ENCODE measurements at regions of chr6 and their contacts with region 1.

Region 1: GRCh38 chr6:26156076-26156849 is 69.0 kb downstream of the HFE start:
- DNase-seq: peak; percentile 91
- ATAC-seq: peak; percentile 55
- H3K4me3 Mint-ChIP-seq: peak overlapping the region; percentile 94
- H3K27ac Mint-ChIP-seq: peak overlapping the region; percentile 99
- H3K4me1 Mint-ChIP-seq: peaks cover 37% of the 10 kb centered on the region
- H3K27me3 Mint-ChIP-seq: peaks cover 8% of the 10 kb centered on the region

Region 2: GRCh38 chr6:26025894-26026832 is 130.1 kb before region 1 on chr6:
- CTCF ChIA-PET with region 1: interaction called, 6 read pairs
- POLR2A ChIA-PET with region 1: interaction called, 312 read pairs
- DNase-seq: peak; percentile 97
- ATAC-seq: peak; percentile 42
- H3K4me3 Mint-ChIP-seq: peak overlapping the region; percentile 86
- H3K27ac Mint-ChIP-seq: peak overlapping the region; percentile 99
- H3K4me1 Mint-ChIP-seq: peaks cover 86% of the 10 kb centered on the region
- H3K27me3 Mint-ChIP-seq: peaks cover 3% of the 10 kb centered on the region

Region 3: DNA sequence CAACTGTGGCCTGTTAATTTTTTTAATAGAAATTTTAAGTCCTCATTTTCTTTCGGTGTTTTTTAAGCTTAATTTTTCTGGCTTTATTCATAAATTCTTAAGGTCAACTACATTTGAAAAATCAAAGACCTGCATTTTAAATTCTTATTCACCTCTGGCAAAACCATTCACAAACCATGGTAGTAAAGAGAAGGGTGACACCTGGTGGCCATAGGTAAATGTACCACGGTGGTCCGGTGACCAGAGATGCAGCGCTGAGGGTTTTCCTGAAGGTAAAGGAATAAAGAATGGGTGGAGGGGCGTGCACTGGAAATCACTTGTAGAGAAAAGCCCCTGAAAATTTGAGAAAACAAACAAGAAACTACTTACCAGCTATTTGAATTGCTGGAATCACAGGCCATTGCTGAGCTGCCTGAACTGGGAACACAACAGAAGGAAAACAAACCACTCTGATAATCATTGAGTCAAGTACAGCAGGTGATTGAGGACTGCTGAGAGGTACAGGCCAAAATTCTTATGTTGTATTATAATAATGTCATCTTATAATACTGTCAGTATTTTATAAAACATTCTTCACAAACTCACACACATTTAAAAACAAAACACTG is 58.9 kb before region 1 on chr6:
- CTCF ChIA-PET with region 1: interaction called, 3 read pairs
- POLR2A ChIA-PET with region 1: interaction called, 213 read pairs
- DNase-seq: peak; percentile 78
- ATAC-seq: peak; percentile 85
- H3K4me3 Mint-ChIP-seq: no peak overlapping the region
- H3K27ac Mint-ChIP-seq: no peak overlapping the region
- H3K4me1 Mint-ChIP-seq: peaks cover 16% of the 10 kb centered on the region
- H3K27me3 Mint-ChIP-seq: peaks cover 9% of the 10 kb centered on the region

Region 4: GRCh38 chr6:26175428-26176181 is 19.3 kb after region 1 on chr6:
- CTCF ChIA-PET with region 1: interaction called, 5 read pairs
- POLR2A ChIA-PET with region 1: interaction called, 664 read pairs
- DNase-seq: peak; percentile 82
- ATAC-seq: peak; percentile 11
- H3K4me3 Mint-ChIP-seq: peak overlapping the region; percentile 38
- H3K27ac Mint-ChIP-seq: peak overlapping the region; percentile 59
- H3K4me1 Mint-ChIP-seq: peaks cover 42% of the 10 kb centered on the region
- H3K27me3 Mint-ChIP-seq: no peaks in the 10 kb centered on the region

Region 5: GRCh38 chr6:26223650-26224546 is 67.6 kb after region 1 on chr6:
- CTCF ChIA-PET with region 1: no interaction called
- POLR2A ChIA-PET with region 1: interaction called, 72 read pairs
- DNase-seq: peak; percentile 83
- ATAC-seq: peak; percentile 83
- H3K4me3 Mint-ChIP-seq: no peak overlapping the region
- H3K27ac Mint-ChIP-seq: no peak overlapping the region
- H3K4me1 Mint-ChIP-seq: peaks cover 37% of the 10 kb centered on the region
- H3K27me3 Mint-ChIP-seq: no peaks in the 10 kb centered on the region

Region 6: DNA sequence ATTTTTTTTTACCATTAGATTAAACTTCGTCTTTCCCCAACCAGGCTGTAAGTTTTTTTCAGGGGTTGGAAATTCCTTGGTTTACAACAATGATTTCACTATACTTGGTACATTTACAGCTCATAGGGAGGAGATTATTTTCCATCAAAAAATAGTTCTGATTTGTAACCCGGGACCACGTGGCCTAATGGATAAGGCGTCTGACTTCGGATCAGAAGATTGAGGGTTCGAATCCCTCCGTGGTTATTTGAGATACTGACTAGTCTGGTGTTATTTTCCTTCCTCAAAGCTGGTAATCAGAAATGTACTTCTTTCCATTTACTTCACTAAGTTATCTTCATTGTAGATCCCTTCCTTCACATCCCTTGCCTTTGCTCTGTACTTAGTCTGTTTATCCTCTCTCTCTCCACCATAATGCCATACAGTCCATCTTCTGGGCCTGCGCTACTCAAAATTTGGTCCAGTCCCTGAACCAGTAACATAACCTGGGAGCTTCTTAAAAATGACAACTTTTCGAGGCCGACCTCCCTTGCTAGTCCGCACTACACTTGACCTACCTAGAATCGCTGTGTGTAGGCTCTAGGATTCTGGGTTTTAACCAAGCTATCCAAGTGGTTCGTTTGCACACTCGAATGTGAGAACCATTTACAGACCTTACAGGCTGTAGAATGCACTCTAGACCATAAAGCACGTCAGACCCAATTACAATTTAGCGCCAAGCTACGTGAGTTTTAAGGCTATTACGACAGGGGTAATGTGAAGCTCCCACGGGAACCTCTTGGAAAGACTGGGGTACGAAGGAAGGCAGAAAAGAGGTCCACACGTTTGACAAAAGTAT is 166.6 kb after region 1 on chr6:
- CTCF ChIA-PET with region 1: no interaction called
- POLR2A ChIA-PET with region 1: no interaction called
- DNase-seq: peak; percentile 84
- ATAC-seq: peak; percentile 72
- H3K4me3 Mint-ChIP-seq: peak overlapping the region; percentile 86
- H3K27ac Mint-ChIP-seq: peak overlapping the region; percentile 86
- H3K4me1 Mint-ChIP-seq: peaks cover 36% of the 10 kb centered on the region
- H3K27me3 Mint-ChIP-seq: peaks cover 16% of the 10 kb centered on the region

Region 7: DNA sequence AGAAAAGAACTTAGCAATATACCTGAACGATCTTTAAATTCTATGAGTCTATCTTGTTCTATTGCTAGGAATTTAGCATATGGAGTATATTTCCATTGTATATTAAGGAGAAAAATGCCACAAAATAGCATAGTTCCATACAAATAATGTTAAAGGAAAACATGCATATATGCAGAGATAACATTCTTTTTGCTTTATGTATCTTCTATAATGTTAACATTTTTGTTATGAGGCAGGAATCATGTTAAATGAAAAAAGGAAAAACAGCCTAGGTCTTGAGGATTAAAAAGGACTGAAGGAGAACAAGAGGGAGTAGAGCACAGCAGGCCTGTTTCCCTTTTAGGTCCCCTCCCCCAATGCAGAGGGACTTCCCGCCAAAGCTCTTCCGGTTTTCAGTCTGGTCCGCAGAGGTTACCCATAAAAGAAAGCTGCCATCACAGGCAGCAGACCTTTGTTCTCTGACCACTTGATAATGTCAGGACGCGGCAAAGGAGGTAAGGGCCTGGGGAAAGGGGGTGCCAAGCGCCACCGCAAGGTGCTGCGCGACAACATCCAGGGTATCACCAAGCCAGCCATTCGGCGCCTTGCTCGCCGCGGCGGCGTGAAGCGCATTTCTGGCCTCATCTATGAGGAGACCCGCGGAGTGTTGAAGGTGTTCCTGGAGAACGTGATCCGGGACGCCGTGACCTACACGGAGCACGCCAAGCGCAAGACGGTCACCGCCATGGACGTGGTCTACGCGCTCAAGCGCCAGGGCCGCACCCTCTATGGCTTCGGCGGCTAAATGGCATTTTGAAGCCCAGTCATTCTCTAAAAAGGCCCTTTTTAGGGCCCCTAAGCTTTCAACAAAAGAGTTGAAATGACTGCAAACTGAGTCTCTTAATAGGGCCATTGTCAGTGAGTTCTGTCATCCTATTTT is 982.8 kb after region 1 on chr6:
- CTCF ChIA-PET with region 1: no interaction called
- POLR2A ChIA-PET with region 1: interaction called, 72 read pairs
- DNase-seq: peak; percentile 87
- ATAC-seq: peak; percentile 68
- H3K4me3 Mint-ChIP-seq: peak overlapping the region; percentile 95
- H3K27ac Mint-ChIP-seq: peak overlapping the region; percentile 98
- H3K4me1 Mint-ChIP-seq: peaks cover 71% of the 10 kb centered on the region
- H3K27me3 Mint-ChIP-seq: no peaks in the 10 kb centered on the region

Region 8: GRCh38 chr6:27864906-27865849 is 1708.9 kb after region 1 on chr6:
- CTCF ChIA-PET with region 1: no interaction called
- POLR2A ChIA-PET with region 1: interaction called, 124 read pairs
- DNase-seq: peak; percentile 90
- ATAC-seq: peak; percentile 57
- H3K4me3 Mint-ChIP-seq: peak overlapping the region; percentile 87
- H3K27ac Mint-ChIP-seq: peak overlapping the region; percentile 99
- H3K4me1 Mint-ChIP-seq: peaks cover 55% of the 10 kb centered on the region
- H3K27me3 Mint-ChIP-seq: no peaks in the 10 kb centered on the region